ENCODE measurements at regions of chr11 and their contacts with region 1.

Region 1: DNA sequence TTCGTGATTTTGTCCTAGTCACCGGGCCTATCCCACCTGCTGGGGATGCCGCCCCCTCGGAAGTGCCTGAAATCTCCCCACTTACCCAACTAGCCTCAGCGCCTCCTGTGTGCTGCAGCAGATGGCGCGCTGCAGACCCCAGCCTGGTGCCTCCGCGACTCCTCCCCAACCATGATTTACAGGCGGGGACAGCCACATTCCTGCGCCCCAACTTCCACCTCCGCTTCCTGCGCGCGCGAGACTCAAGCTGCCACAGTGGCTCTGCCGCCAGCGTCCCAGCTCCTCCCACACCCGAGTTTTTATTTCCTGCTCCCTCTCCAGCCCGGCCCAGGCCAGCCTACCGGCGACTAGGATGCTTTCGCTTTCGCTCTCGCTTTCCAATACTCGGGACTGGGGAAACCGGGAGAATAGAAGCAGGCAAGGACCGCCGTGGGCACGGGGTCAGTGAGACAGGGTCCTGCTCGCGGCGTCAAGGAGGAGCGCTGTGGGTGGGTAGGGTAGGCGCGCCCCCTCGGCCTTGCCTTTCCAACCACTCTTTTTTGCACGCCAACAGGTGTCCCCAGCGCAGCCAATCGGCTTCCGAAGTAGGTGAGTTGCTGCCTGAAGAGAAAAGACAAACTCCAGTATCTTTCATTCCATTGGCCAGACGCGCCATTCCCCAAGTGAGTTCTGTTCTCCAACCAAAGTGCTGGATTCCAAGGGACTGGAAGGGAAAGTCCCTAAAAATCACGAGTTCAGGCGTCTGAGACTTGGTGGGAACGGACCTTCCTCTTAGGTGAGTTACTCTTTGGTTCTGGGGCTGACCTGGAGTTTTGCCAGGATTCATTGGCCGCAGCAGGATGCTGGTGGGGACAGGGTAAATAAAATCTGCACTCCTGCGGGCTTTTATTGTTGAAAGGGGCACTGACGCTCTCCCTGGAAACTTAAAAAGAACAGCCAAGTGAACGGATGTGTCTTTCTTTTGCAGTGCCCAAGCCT is at the start of gene FAM111A:
- DNase-seq: peak; percentile 68 to 91 (median 89)
- ATAC-seq: peak; percentile 91
- H3K4me3 ChIP-seq: peak within 1 kb of the TSS; percentile 97
- H3K4me3 Mint-ChIP-seq: peak within 1 kb of the TSS; percentile 95 to 100 (median 98)
- H3K27ac ChIP-seq: peak within 1 kb of the TSS; percentile 81
- H3K27ac Mint-ChIP-seq: peak within 1 kb of the TSS; percentile 93 to 99 (median 97)
- H3K4me1 ChIP-seq: peaks cover 19 to 24% of the 10 kb centered on the region in 2 donors
- H3K4me1 Mint-ChIP-seq: peaks cover 42 to 70% (median 53%) of the 10 kb centered on the region in 7 donors
- H3K27me3 ChIP-seq: no peaks in the 10 kb centered on the region
- H3K27me3 Mint-ChIP-seq: no peaks in the 10 kb centered on the region
- total RNA-seq, gene FAM111A: 73.1 to 138 (median 117) TPM

Region 2: GRCh38 chr11:57657194-57658022 is 1485.4 kb before region 1 on chr11 and contains the start of gene CLP1:
- CTCF ChIA-PET with region 1: no interaction called
- POLR2A ChIA-PET with region 1: no interaction called
- intact Hi-C with region 1: loop called in 1 of 2 experiments (anchors 1 kb)
- DNase-seq: peak; percentile 87 to 99 (median 98)
- ATAC-seq: peak; percentile 99
- H3K4me3 ChIP-seq: peak within 1 kb of the TSS; percentile 64
- H3K4me3 Mint-ChIP-seq: peak within 1 kb of the TSS; percentile 89 to 100 (median 94)
- H3K27ac ChIP-seq: peak within 1 kb of the TSS; percentile 92
- H3K27ac Mint-ChIP-seq: peak within 1 kb of the TSS; percentile 88 to 98 (median 94)
- H3K4me1 ChIP-seq: peaks cover 4 to 10% of the 10 kb centered on the region in 2 donors
- H3K4me1 Mint-ChIP-seq: peaks cover 8 to 45% (median 36%) of the 10 kb centered on the region in 7 donors
- H3K27me3 ChIP-seq: no peaks in the 10 kb centered on the region
- H3K27me3 Mint-ChIP-seq: no peaks in the 10 kb centered on the region
- total RNA-seq, gene CLP1: 12.8 to 18.5 (median 14.7) TPM

Region 3: GRCh38 chr11:58524232-58525036 is 618.4 kb before region 1 on chr11:
- CTCF ChIA-PET with region 1: no interaction called
- POLR2A ChIA-PET with region 1: no interaction called
- intact Hi-C with region 1: loop called in 1 of 2 experiments (anchors 5 kb)
- DNase-seq: peak in 8 of 9 donors; percentile 39 to 78 (median 70)
- ATAC-seq: peak; percentile 78
- H3K4me3 ChIP-seq: peak overlapping the region; percentile 10
- H3K4me3 Mint-ChIP-seq: peak overlapping the region; percentile 65 to 85 (median 80)
- H3K27ac ChIP-seq: peak overlapping the region; percentile 75
- H3K27ac Mint-ChIP-seq: peak overlapping the region; percentile 84 to 99 (median 97)
- H3K4me1 ChIP-seq: peaks cover 18 to 50% of the 10 kb centered on the region in 2 donors
- H3K4me1 Mint-ChIP-seq: peaks cover 27 to 90% (median 54%) of the 10 kb centered on the region in 7 donors
- H3K27me3 ChIP-seq: no peaks in the 10 kb centered on the region
- H3K27me3 Mint-ChIP-seq: no peaks in the 10 kb centered on the region

Region 4: DNA sequence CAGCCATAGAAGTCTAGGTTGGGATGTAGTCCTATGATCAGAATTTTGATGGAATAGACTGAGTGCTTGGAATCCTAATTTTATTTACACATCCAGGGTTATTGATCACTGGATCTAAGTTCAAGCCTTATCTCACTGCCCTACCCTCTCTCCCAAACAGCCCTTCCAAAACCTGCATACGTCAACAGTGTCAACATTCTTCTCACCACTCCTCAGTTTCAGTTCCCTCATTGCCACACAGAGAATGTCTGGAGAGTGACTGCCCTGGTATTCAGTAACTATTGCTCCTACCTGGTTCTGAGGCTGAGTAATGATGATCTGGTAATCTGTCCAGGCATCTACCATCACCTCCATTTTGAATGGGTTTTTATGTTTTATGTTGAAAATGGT is 143.5 kb before region 1 on chr11:
- CTCF ChIA-PET with region 1: no interaction called
- POLR2A ChIA-PET with region 1: no interaction called
- intact Hi-C with region 1: no loop called
- DNase-seq: no peak
- ATAC-seq: peak; percentile 61
- H3K4me3 ChIP-seq: no peak overlapping the region
- H3K4me3 Mint-ChIP-seq: no peak overlapping the region
- H3K27ac ChIP-seq: no peak overlapping the region
- H3K27ac Mint-ChIP-seq: no peak overlapping the region
- H3K4me1 ChIP-seq: no peaks in the 10 kb centered on the region
- H3K4me1 Mint-ChIP-seq: peaks cover 0 to 2% (median 0%) of the 10 kb centered on the region in 7 donors
- H3K27me3 ChIP-seq: no peaks in the 10 kb centered on the region
- H3K27me3 Mint-ChIP-seq: peaks cover 0 to 24% (median 13%) of the 10 kb centered on the region in 5 donors

Region 5: GRCh38 chr11:59106363-59107336 is 36.2 kb before region 1 on chr11 and contains the start of gene FAM111B:
- CTCF ChIA-PET with region 1: no interaction called
- POLR2A ChIA-PET with region 1: no interaction called
- intact Hi-C with region 1: loop called in 1 of 2 experiments (anchors 1 kb)
- DNase-seq: peak; percentile 10 to 76 (median 39)
- ATAC-seq: peak; percentile 85
- H3K4me3 ChIP-seq: peak within 1 kb of the TSS; percentile 65
- H3K4me3 Mint-ChIP-seq: peak within 1 kb of the TSS; percentile 71 to 92 (median 83)
- H3K27ac ChIP-seq: no peak within 1 kb of the TSS
- H3K27ac Mint-ChIP-seq: peak within 1 kb of the TSS in 3 of 9 donors; percentile 13 to 83 (median 49)
- H3K4me1 ChIP-seq: peaks cover 12% of the 10 kb centered on the region in 2 donors
- H3K4me1 Mint-ChIP-seq: peaks cover 13 to 79% (median 26%) of the 10 kb centered on the region in 7 donors
- H3K27me3 ChIP-seq: peaks cover 0 to 5% of the 10 kb centered on the region in 2 donors
- H3K27me3 Mint-ChIP-seq: peaks cover 0 to 38% (median 34%) of the 10 kb centered on the region in 5 donors
- total RNA-seq, gene FAM111B: 0.11 to 79.8 (median 0.42) TPM in 4 of 5 experiments, not detected in the other

Region 6: GRCh38 chr11:59283825-59284772 is 141.3 kb after region 1 on chr11:
- CTCF ChIA-PET with region 1: no interaction called
- POLR2A ChIA-PET with region 1: no interaction called
- intact Hi-C with region 1: no loop called
- DNase-seq: peak; percentile 21 to 68 (median 57)
- ATAC-seq: peak; percentile 90
- H3K4me3 ChIP-seq: peak overlapping the region; percentile 46
- H3K4me3 Mint-ChIP-seq: peak overlapping the region; percentile 67 to 88 (median 82)
- H3K27ac ChIP-seq: no peak overlapping the region
- H3K27ac Mint-ChIP-seq: peak overlapping the region in 6 of 9 donors; percentile 3 to 92 (median 24)
- H3K4me1 ChIP-seq: peaks cover 0 to 9% of the 10 kb centered on the region in 2 donors
- H3K4me1 Mint-ChIP-seq: peaks cover 11 to 19% (median 18%) of the 10 kb centered on the region in 7 donors
- H3K27me3 ChIP-seq: no peaks in the 10 kb centered on the region
- H3K27me3 Mint-ChIP-seq: peaks cover 5 to 18% (median 12%) of the 10 kb centered on the region in 5 donors

Region 7: DNA sequence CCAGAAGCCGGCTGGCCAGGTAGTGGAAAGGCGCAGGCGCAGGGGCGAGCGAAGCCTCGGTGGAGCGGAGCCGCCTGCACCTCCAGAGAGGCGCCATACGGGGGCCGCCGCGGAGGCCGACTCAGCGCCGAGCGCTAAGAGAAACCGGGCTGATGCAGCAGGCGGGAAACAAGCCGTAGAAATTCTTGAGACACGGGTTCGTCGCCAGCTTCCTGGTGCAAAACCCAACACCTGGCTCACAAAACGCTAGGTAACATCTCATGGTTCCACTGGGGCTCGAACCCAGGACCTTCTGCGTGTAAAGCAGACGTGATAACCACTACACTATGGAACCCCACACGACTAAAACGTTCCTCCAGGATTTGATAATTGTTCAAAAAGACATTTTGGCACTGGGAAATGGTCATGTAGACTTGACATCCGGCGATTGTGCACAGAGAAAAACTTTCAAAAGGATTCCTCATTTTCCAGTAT is 407.6 kb after region 1 on chr11:
- CTCF ChIA-PET with region 1: no interaction called
- POLR2A ChIA-PET with region 1: no interaction called
- intact Hi-C with region 1: loop called in 1 of 2 experiments (anchors 1 kb)
- DNase-seq: peak; percentile 67 to 95 (median 89)
- ATAC-seq: peak; percentile 92
- H3K4me3 ChIP-seq: peak overlapping the region; percentile 59
- H3K4me3 Mint-ChIP-seq: peak overlapping the region; percentile 70 to 98 (median 92)
- H3K27ac ChIP-seq: peak overlapping the region; percentile 66
- H3K27ac Mint-ChIP-seq: peak overlapping the region; percentile 89 to 100 (median 98)
- H3K4me1 ChIP-seq: peaks cover under 1 to 4% of the 10 kb centered on the region in 2 donors
- H3K4me1 Mint-ChIP-seq: peaks cover 0 to 40% (median 32%) of the 10 kb centered on the region in 7 donors
- H3K27me3 ChIP-seq: no peaks in the 10 kb centered on the region
- H3K27me3 Mint-ChIP-seq: peaks cover 0 to 28% (median 0%) of the 10 kb centered on the region in 5 donors

Region 8: DNA sequence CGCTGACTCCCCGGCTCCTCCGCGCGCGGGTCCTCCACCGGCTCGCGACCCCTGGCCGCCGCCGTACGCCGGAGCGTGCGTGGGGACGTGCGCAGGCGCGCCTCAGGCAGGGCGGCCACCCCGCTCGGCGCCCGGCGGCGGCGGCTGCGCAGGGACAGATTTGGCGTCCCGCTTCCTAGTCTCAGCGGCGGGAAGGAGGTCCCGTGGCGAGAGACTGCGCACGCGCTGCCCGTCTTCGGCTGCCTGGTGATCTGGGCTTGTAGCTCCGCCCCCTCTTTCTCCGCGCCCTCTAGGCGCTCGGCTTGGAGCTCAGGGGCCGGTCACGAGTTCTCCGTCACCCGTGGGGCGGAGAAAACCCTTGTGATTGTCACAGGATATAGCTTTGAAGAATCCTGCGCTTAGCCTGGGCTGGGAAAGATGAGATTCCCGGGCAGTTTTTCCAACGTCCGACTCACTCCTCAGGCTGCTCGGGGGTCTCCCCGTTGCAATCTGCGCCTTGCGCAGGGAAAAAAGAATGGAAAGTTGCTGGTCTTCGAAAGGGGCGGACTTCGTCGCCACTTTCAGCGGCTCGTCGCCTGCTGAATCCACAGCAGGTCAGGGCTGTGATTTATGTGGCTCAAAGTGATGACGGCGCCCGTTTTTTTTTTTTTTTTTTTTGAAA is 526.3 kb after region 1 on chr11 and contains the start of gene PATL1:
- CTCF ChIA-PET with region 1: no interaction called
- POLR2A ChIA-PET with region 1: no interaction called
- intact Hi-C with region 1: loop called (anchors 1 kb)
- DNase-seq: peak; percentile 96 to 100 (median 99)
- ATAC-seq: peak; percentile 94
- H3K4me3 ChIP-seq: peak within 1 kb of the TSS; percentile 94
- H3K4me3 Mint-ChIP-seq: peak within 1 kb of the TSS; percentile 83 to 100 (median 96)
- H3K27ac ChIP-seq: peak within 1 kb of the TSS; percentile 98
- H3K27ac Mint-ChIP-seq: peak within 1 kb of the TSS; percentile 97 to 100 (median 99)
- H3K4me1 ChIP-seq: peaks cover 17 to 23% of the 10 kb centered on the region in 2 donors
- H3K4me1 Mint-ChIP-seq: peaks cover 32 to 50% (median 41%) of the 10 kb centered on the region in 7 donors
- H3K27me3 ChIP-seq: no peaks in the 10 kb centered on the region
- H3K27me3 Mint-ChIP-seq: peaks cover 0 to 2% (median 0%) of the 10 kb centered on the region in 5 donors
- total RNA-seq, gene PATL1: 40.6 to 60.1 (median 45.3) TPM

Region 9: DNA sequence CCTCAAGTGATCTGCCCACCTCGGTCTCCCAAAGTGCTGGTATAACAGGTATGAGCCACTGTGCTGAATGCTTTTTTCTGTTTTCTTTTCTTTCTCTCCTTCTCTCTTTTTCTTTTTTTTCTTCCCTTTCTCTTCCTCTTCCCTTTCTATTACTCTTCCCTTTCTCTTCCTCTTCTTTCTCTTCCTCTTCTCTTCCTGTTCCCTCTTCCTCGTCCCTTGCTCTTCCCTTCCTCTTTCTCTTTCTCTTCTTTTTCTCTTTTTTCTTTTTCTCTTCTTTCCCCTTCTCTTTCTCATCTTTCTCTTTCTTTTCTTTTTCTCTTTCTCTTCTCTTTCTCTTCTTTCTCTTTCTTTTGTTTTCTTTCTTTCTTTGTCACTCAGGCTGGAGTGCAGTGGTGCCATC is 796.7 kb after region 1 on chr11:
- CTCF ChIA-PET with region 1: no interaction called
- POLR2A ChIA-PET with region 1: no interaction called
- intact Hi-C with region 1: no loop called
- DNase-seq: no peak
- ATAC-seq: no peak
- H3K4me3 ChIP-seq: no peak overlapping the region
- H3K4me3 Mint-ChIP-seq: no peak overlapping the region
- H3K27ac ChIP-seq: no peak overlapping the region
- H3K27ac Mint-ChIP-seq: no peak overlapping the region
- H3K4me1 ChIP-seq: no peaks in the 10 kb centered on the region
- H3K4me1 Mint-ChIP-seq: peaks cover 0 to 5% (median 0%) of the 10 kb centered on the region in 7 donors
- H3K27me3 ChIP-seq: no peaks in the 10 kb centered on the region
- H3K27me3 Mint-ChIP-seq: peaks cover 0 to 32% (median 23%) of the 10 kb centered on the region in 5 donors